CD8-positive, alpha-beta T cell (primary cell): ENCODE measurements at regions of chr9 and their contacts with region 1.

Region 1: DNA sequence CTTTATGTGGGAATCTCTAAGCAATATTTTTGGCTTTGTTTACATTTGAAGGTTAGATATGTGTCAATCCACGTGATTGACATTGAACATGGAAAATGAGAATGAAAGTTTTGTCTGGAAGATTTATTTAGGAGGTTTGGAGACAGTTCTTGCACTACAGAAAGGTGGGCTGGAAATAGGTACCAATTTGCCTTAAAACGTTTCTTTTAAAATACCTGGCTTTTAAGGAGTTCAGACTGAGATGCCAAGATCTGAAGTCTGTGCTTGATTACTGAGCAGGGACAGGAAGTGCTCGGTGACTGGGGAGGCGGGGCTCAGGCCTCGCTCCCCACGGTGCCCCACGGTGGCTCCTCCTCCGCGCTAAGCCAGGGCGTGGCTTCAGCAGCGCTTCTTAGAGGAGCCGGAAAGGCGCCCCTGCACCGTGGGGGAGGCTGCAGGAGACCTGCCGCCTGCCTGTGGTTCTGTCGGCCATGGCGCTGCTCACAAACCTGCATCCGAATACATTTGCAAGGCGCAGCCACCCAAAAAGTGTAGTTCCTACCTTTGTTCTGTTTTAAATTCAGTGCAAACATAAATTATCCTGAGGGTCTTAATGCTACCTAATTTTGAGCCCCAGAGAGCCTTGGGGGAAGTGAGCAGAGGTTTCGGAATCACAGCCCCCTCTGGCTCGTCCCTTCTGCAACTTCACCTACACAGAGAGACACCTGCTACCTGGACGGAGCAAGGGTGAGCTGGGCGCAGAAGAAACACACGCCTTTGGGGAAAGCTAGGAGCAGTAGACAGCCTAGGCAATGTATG is 49.2 kb downstream of the USP20 start:
- DNase-seq: peak; percentile 92 to 98 (median 97)
- ATAC-seq: peak; percentile 53
- H3K4me3 ChIP-seq: peak overlapping the region; percentile 66 to 92
- H3K4me3 Mint-ChIP-seq: peak overlapping the region; percentile 89
- H3K27ac ChIP-seq: peak overlapping the region; percentile 91 to 98
- H3K27ac Mint-ChIP-seq: peak overlapping the region; percentile 100
- H3K4me1 ChIP-seq: peaks cover 51% of the 10 kb centered on the region
- H3K4me1 Mint-ChIP-seq: peaks cover 55% of the 10 kb centered on the region
- H3K27me3 ChIP-seq: no peaks in the 10 kb centered on the region
- H3K27me3 Mint-ChIP-seq: no peaks in the 10 kb centered on the region
- CTCF ChIP-seq: no peak

Region 2: DNA sequence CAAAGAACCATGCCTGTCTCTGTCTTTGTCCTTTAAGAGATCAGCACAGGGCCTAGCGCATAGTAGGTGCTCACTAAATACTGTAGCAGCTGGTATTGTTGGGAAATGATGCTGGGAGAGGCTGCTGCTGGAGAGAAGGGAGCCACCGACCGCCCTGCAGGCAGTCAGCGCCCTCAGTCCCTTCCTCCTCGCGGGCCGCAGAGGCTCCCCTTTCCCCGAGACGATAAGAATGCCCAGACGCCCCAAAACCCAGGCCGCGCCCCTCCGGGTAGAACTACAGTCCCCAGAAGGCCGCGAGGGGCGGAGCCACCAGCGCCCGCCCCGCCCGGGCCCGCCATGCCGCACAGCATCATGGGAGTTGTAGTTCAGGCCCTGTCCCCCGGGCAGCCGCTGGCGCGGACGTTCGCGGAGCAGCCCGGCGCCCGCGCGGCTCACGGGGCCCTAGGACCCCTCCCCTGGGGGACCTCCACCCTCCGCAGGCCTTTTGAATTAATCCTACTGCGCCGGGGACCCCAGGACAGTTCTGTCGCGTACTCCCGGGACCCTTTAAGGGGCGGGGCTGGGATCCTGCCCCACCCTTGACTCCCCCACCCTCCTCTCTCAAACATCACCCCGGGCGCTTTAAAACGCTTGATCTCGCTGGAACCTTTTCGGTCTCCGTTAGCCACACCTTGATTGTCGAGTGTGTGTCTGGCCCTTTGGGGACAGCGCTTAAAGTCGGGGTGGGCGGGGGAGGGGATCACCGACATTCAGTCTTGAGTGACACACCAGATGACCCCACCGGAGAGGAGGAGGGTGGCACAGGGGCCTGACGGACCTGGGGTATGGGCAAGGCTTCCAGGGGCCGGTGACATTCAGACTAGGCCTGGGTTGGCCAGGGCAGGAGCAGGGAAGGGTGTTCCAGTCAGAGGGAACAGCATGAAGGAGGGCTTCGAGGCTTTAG is 681.5 kb before region 1 on chr9:
- CTCF ChIA-PET with region 1: no interaction called
- POLR2A ChIA-PET with region 1: no interaction called
- intact Hi-C with region 1: no loop called
- DNase-seq: peak; percentile 84 to 96 (median 90)
- ATAC-seq: peak; percentile 93
- H3K4me3 ChIP-seq: peak overlapping the region; percentile 56 to 95
- H3K4me3 Mint-ChIP-seq: peak overlapping the region; percentile 78
- H3K27ac ChIP-seq: peak overlapping the region; percentile 62 to 65
- H3K27ac Mint-ChIP-seq: peak overlapping the region; percentile 79
- H3K4me1 ChIP-seq: peaks cover 30% of the 10 kb centered on the region
- H3K4me1 Mint-ChIP-seq: peaks cover 28% of the 10 kb centered on the region
- H3K27me3 ChIP-seq: no peaks in the 10 kb centered on the region
- H3K27me3 Mint-ChIP-seq: no peaks in the 10 kb centered on the region
- CTCF ChIP-seq: no peak

Region 3: DNA sequence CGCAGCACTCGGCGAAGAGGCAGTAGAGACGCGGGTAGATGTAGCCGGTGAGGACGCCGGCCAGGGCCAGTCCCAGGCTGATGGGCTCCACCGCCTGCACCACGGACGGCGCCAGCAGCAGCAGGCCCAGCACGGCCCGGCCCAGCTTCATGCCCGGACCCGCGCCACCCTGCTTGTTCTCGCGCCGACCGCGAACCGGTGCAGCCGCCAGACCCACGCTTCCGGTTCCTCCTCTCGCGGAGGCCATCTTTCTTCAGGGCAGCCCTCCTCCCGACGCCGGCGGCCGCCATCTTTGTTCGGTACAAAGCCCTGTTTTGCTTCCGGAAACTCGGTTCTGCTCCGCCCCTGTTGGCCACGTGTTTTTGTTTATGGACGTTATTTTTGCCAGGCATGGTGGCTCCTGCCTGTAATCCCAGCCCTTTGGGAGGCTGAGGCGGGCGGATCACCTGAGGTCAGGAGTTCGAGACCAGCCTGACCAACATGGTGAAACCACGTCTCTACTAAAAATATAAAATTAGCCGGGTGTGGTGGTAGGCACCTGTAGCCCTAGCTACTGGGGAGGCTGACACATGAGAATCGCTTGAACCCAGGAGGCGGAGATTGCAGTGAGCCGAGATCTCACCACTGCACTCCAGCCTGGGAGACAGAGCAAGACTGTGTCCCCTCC is 60.4 kb before region 1 on chr9 and contains the start of gene TOR1A:
- CTCF ChIA-PET with region 1: no interaction called
- POLR2A ChIA-PET with region 1: interaction called, 4 read pairs
- intact Hi-C with region 1: loop called in 1 of 2 experiments (anchors 1 kb)
- DNase-seq: peak; percentile 83 to 96 (median 91)
- ATAC-seq: peak; percentile 87
- H3K4me3 ChIP-seq: peak within 1 kb of the TSS; percentile 64 to 87
- H3K4me3 Mint-ChIP-seq: peak within 1 kb of the TSS; percentile 89
- H3K27ac ChIP-seq: peak within 1 kb of the TSS; percentile 44 to 53
- H3K27ac Mint-ChIP-seq: peak within 1 kb of the TSS; percentile 87
- H3K4me1 ChIP-seq: peaks cover 9% of the 10 kb centered on the region
- H3K4me1 Mint-ChIP-seq: peaks cover 16% of the 10 kb centered on the region
- H3K27me3 ChIP-seq: no peaks in the 10 kb centered on the region
- H3K27me3 Mint-ChIP-seq: no peaks in the 10 kb centered on the region
- CTCF ChIP-seq: no peak
- total RNA-seq, gene TOR1A: 18.9 to 19.6 TPM

Region 4: DNA sequence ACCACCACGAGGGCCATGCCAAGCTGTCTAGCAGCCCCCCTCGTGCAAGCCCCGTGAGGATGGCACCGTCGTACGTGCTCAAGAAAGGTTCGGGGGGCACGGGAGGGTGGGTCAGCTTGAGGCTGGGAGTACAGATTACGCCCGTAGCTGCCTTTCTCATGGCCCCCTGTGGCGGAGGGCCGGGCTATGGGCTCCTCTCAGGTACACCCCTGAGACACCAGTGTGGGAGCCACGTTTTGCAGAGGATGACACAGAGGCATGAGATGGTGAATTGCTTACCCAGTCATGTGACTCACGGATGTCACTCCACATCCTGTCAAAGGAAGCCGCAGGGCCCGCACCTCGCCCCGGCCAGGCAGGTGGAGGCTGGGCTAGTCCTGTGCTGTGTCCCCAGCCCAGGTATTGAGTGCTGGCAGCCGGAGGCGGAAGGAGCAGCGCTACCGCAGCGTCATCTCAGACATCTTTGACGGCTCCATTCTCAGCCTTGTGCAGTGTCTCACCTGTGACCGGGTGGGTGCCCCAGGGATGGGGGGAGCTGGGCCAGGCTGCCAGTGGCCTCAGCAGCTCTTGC is 15.4 kb before region 1 on chr9:
- CTCF ChIA-PET with region 1: interaction called, 12 read pairs
- POLR2A ChIA-PET with region 1: interaction called, 49 read pairs
- intact Hi-C with region 1: loop called (anchors 1 kb)
- DNase-seq: peak; percentile 85 to 97 (median 93)
- ATAC-seq: peak; percentile 87
- H3K4me3 ChIP-seq: peak overlapping the region; percentile 19 to 51
- H3K4me3 Mint-ChIP-seq: peak overlapping the region; percentile 65
- H3K27ac ChIP-seq: peak overlapping the region; percentile 85
- H3K27ac Mint-ChIP-seq: peak overlapping the region; percentile 95
- H3K4me1 ChIP-seq: peaks cover 80% of the 10 kb centered on the region
- H3K4me1 Mint-ChIP-seq: peaks cover 76% of the 10 kb centered on the region
- H3K27me3 ChIP-seq: no peaks in the 10 kb centered on the region
- H3K27me3 Mint-ChIP-seq: no peaks in the 10 kb centered on the region
- CTCF ChIP-seq: no peak

Region 5: GRCh38 chr9:129944506-129945116 is 60.2 kb after region 1 on chr9:
- CTCF ChIA-PET with region 1: interaction called, 9 read pairs
- POLR2A ChIA-PET with region 1: interaction called, 14 read pairs
- intact Hi-C with region 1: loop called (anchors 2 kb)
- DNase-seq: peak; percentile 21 to 90 (median 45)
- ATAC-seq: peak; percentile 88
- H3K4me3 ChIP-seq: no peak overlapping the region
- H3K4me3 Mint-ChIP-seq: peak overlapping the region; percentile 9
- H3K27ac ChIP-seq: peak overlapping the region; percentile 68 to 73
- H3K27ac Mint-ChIP-seq: peak overlapping the region; percentile 83
- H3K4me1 ChIP-seq: peaks cover 55% of the 10 kb centered on the region
- H3K4me1 Mint-ChIP-seq: peaks cover 51% of the 10 kb centered on the region
- H3K27me3 ChIP-seq: no peaks in the 10 kb centered on the region
- H3K27me3 Mint-ChIP-seq: no peaks in the 10 kb centered on the region
- CTCF ChIP-seq: peak; percentile 27

Region 6: GRCh38 chr9:129981180-129981907 is 96.9 kb after region 1 on chr9:
- CTCF ChIA-PET with region 1: no interaction called
- POLR2A ChIA-PET with region 1: no interaction called
- intact Hi-C with region 1: no loop called
- DNase-seq: no peak
- ATAC-seq: no peak
- H3K4me3 ChIP-seq: no peak overlapping the region
- H3K4me3 Mint-ChIP-seq: no peak overlapping the region
- H3K27ac ChIP-seq: no peak overlapping the region
- H3K27ac Mint-ChIP-seq: peak overlapping the region; percentile 52
- H3K4me1 ChIP-seq: peaks cover 8% of the 10 kb centered on the region
- H3K4me1 Mint-ChIP-seq: peaks cover 59% of the 10 kb centered on the region
- H3K27me3 ChIP-seq: no peaks in the 10 kb centered on the region
- H3K27me3 Mint-ChIP-seq: no peaks in the 10 kb centered on the region
- CTCF ChIP-seq: no peak

Region 7: GRCh38 chr9:130042833-130043653 is 158.6 kb after region 1 on chr9 and contains the start of gene FNBP1:
- CTCF ChIA-PET with region 1: interaction called, 8 read pairs
- POLR2A ChIA-PET with region 1: interaction called, 28 read pairs
- intact Hi-C with region 1: loop called (anchors 1 to 2 kb)
- DNase-seq: peak; percentile 69 to 90 (median 80)
- ATAC-seq: peak; percentile 71
- H3K4me3 ChIP-seq: peak within 1 kb of the TSS; percentile 68 to 97
- H3K4me3 Mint-ChIP-seq: peak within 1 kb of the TSS; percentile 95
- H3K27ac ChIP-seq: peak within 1 kb of the TSS; percentile 82 to 84
- H3K27ac Mint-ChIP-seq: peak within 1 kb of the TSS; percentile 97
- H3K4me1 ChIP-seq: peaks cover 37% of the 10 kb centered on the region
- H3K4me1 Mint-ChIP-seq: peaks cover 58% of the 10 kb centered on the region
- H3K27me3 ChIP-seq: no peaks in the 10 kb centered on the region
- H3K27me3 Mint-ChIP-seq: no peaks in the 10 kb centered on the region
- CTCF ChIP-seq: no peak
- total RNA-seq, gene FNBP1: 169 to 194 TPM

Region 8: DNA sequence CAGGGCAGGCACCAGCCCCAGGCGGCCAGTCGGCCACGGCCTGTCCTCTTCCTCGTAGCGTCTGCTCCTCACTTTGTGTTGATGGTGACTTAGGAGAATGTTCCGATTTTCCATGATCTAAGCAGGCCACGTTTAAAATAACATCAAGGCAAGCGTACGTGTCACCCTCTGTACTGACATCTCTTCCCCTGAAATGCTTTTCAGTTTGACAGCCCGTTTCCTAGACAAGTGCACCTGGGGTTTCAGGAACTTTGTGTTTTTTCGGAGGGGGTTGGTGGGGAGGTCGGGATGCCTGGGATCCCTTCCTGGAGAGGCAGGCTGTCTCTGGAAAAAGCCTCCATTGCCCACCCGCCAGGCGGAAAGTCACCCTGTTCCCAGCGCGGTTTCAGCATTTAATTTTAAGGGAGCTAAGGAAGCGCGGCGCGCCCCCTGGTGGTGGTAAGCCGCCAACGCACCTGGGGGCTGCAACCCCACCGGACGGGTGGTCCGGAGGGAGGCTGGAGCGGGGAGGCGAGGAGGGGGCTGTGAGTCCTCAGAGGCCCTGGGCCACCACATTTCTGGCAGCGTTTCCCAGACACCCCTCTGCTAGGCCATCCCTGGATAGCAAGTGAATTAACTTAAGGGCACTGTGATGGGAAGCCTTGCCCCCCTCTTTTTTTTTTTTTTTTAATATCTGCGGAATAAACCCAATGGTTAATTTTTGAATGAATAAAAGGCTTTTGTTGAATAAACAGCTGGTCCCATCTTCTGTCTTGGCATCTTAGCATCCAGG is 351.7 kb after region 1 on chr9:
- CTCF ChIA-PET with region 1: no interaction called
- POLR2A ChIA-PET with region 1: no interaction called
- intact Hi-C with region 1: loop called in 1 of 2 experiments (anchors 5 kb)
- DNase-seq: peak; percentile 53 to 85 (median 70)
- ATAC-seq: peak; percentile 66
- H3K4me3 ChIP-seq: no peak overlapping the region
- H3K4me3 Mint-ChIP-seq: peak overlapping the region; percentile 42
- H3K27ac ChIP-seq: no peak overlapping the region
- H3K27ac Mint-ChIP-seq: no peak overlapping the region
- H3K4me1 ChIP-seq: peaks cover 5% of the 10 kb centered on the region
- H3K4me1 Mint-ChIP-seq: peaks cover 8% of the 10 kb centered on the region
- H3K27me3 ChIP-seq: no peaks in the 10 kb centered on the region
- H3K27me3 Mint-ChIP-seq: no peaks in the 10 kb centered on the region
- CTCF ChIP-seq: peak; percentile 98